Gastrocnemius medialis (tissue), 4 donors: ENCODE measurements at regions of chr2 and their contacts with region 1.

Region 1: GRCh38 chr2:173027181-173028128 is 48.2 kb upstream of the MAP3K20 start:
- DNase-seq: peak; percentile 77 to 84
- ATAC-seq: peak; percentile 71 to 78
- H3K4me3 ChIP-seq: peak overlapping the region in 3 of 4 donors; percentile 14 to 27 (median 18)
- H3K27ac ChIP-seq: peak overlapping the region; percentile 86 to 94 (median 90)
- H3K4me1 ChIP-seq: peaks cover 56 to 57% of the 10 kb centered on the region in 2 donors
- H3K27me3 ChIP-seq: no peaks in the 10 kb centered on the region
- CTCF ChIP-seq: peak; percentile 94 to 98 (median 95)
- POLR2A ChIP-seq: peak; percentile 18 to 87

Region 2: DNA sequence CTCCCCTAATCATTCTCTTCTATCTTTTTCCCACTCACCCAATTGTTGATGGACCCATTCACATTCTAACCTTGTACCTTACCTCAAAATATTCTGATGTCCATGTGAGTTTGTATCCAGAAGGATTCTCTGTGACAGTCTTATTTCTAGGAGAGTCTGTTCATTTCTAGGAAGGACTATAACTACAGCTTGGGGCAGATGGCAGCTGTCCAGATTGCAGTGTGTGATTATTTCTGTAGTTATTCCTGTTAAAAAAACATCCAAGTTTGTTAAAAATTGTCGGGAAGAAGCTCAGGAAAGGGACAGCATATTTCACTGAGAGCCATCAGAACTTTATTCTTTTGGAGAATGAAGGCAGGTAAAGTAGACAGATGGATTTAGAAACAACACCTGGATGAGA is 149.2 kb before region 1 on chr2:
- in situ Hi-C with region 1: no loop called
- intact Hi-C with region 1: no loop called
- DNase-seq: no peak
- ATAC-seq: no peak
- H3K4me3 ChIP-seq: no peak overlapping the region
- H3K27ac ChIP-seq: no peak overlapping the region
- H3K4me1 ChIP-seq: no peaks in the 10 kb centered on the region
- H3K27me3 ChIP-seq: no peaks in the 10 kb centered on the region
- CTCF ChIP-seq: no peak
- POLR2A ChIP-seq: no peak

Region 3: GRCh38 chr2:173002751-173003541 is 24.5 kb before region 1 on chr2:
- in situ Hi-C with region 1: no loop called
- intact Hi-C with region 1: loop called (anchors 2 kb)
- DNase-seq: no peak
- ATAC-seq: peak in 1 of 2 donors; percentile 18
- H3K4me3 ChIP-seq: no peak overlapping the region
- H3K27ac ChIP-seq: peak overlapping the region; percentile 81 to 93 (median 88)
- H3K4me1 ChIP-seq: peaks cover 58 to 65% of the 10 kb centered on the region in 2 donors
- H3K27me3 ChIP-seq: no peaks in the 10 kb centered on the region
- CTCF ChIP-seq: no peak
- POLR2A ChIP-seq: peak in 1 of 2 donors; percentile 9

Region 4: GRCh38 chr2:173210270-173211196 is 183.1 kb after region 1 on chr2:
- in situ Hi-C with region 1: loop called (anchors 5 to 10 kb)
- intact Hi-C with region 1: loop called (anchors 1 kb)
- DNase-seq: peak; percentile 88 to 91
- ATAC-seq: peak; percentile 83 to 88
- H3K4me3 ChIP-seq: no peak overlapping the region
- H3K27ac ChIP-seq: peak overlapping the region; percentile 83 to 91 (median 88)
- H3K4me1 ChIP-seq: peaks cover 59 to 84% of the 10 kb centered on the region in 2 donors
- H3K27me3 ChIP-seq: no peaks in the 10 kb centered on the region
- CTCF ChIP-seq: peak; percentile 83 to 96 (median 86)
- POLR2A ChIP-seq: peak in 1 of 2 donors; percentile 24

Region 5: GRCh38 chr2:173448938-173449471 is 421.6 kb after region 1 on chr2:
- in situ Hi-C with region 1: no loop called
- intact Hi-C with region 1: loop called (anchors 5 kb)
- DNase-seq: peak; percentile 54 to 72
- ATAC-seq: peak; percentile 63 to 86
- H3K4me3 ChIP-seq: peak overlapping the region; percentile 13 to 43 (median 36)
- H3K27ac ChIP-seq: peak overlapping the region; percentile 12 to 57 (median 46)
- H3K4me1 ChIP-seq: no peaks in the 10 kb centered on the region
- H3K27me3 ChIP-seq: no peaks in the 10 kb centered on the region
- CTCF ChIP-seq: peak; percentile 69 to 83 (median 73)
- POLR2A ChIP-seq: peak in 1 of 2 donors; percentile 13